ENCODE measurements at regions of chr12 and their contacts with region 1.

Region 1: DNA sequence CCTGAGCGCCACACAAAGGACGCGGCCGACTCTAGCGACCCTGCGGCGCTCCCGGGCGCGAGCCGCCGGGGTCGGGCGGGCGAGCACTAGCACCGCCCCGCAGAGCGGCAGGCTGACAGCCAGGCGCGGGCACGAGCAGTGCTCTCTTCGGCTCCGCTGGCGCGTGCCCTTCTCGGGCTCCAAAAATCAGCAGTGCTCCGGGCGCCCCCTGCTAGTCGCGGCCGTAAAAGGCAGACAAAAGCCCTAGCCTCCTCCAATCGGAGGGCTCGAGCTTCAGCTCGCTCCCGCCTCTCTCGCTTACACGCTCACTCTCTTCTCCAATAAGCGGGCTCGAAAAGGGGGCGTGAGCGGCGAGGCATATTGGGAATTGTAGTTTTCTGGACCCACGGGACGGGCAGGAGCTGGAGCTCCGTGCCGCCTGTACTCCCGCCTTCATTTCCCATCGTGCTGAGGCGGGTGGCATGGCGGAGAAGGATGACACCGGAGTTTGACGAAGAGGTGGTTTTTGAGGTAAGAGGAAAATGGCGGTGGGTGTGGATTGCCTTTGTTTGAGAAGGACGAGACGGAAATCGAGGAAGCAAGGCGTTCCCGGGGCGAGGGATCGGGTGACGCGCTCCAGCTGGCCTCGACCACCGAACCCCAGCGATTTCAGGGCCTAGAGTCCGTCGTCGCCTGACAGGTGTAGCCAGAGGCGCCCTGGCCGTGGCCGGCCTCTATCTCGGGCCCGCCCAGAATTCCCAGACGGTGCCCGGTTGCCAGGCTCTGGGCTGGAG is at the starts of genes FGD6 and VEZT:
- DNase-seq: peak; percentile 100
- H3K4me3 ChIP-seq: peak within 1 kb of the TSS; percentile 72 to 95 (median 92)
- H3K27ac ChIP-seq: peak within 1 kb of the TSS; percentile 93
- H3K4me1 ChIP-seq: peaks cover 21% of the 10 kb centered on the region
- H3K27me3 ChIP-seq: no peaks in the 10 kb centered on the region
- CTCF ChIP-seq: peak; percentile 41 to 75
- total RNA-seq, gene FGD6: 39.3 to 55.6 TPM
- total RNA-seq, gene VEZT: 113 to 133 TPM

Region 2: DNA sequence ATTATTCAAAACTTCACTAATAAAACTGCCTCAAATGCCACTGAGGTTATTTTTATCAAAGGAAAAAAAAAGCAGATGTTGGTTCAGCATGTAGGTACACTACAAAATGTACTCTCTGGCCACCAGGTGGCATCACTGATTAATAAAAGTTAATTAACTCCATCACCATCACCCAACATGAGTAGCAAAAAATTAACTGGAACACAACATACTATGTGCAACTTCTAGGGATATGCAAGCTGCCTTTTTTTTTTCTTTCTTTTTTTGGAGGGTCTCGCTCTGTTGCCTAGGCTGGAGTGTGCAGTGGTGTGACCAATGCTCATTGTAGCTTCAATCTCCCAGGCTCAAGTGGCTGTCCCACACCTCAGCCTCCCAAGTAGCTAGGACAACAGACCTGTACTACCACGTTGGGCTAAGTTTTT is 100.4 kb before region 1 on chr12:
- CTCF ChIA-PET with region 1: interaction called, 8 read pairs
- dilution Hi-C with region 1: loop called (anchors 5 kb)
- in situ Hi-C with region 1: loop called in 1 of 2 experiments (anchors 5 kb)
- intact Hi-C with region 1: loop called (anchors 1 kb)
- DNase-seq: no peak
- H3K4me3 ChIP-seq: peak overlapping the region in 1 of 3 experiments; percentile 56
- H3K27ac ChIP-seq: peak overlapping the region; percentile 99
- H3K4me1 ChIP-seq: peaks cover 44% of the 10 kb centered on the region
- H3K27me3 ChIP-seq: no peaks in the 10 kb centered on the region
- CTCF ChIP-seq: peak; percentile 67 to 71

Region 3: DNA sequence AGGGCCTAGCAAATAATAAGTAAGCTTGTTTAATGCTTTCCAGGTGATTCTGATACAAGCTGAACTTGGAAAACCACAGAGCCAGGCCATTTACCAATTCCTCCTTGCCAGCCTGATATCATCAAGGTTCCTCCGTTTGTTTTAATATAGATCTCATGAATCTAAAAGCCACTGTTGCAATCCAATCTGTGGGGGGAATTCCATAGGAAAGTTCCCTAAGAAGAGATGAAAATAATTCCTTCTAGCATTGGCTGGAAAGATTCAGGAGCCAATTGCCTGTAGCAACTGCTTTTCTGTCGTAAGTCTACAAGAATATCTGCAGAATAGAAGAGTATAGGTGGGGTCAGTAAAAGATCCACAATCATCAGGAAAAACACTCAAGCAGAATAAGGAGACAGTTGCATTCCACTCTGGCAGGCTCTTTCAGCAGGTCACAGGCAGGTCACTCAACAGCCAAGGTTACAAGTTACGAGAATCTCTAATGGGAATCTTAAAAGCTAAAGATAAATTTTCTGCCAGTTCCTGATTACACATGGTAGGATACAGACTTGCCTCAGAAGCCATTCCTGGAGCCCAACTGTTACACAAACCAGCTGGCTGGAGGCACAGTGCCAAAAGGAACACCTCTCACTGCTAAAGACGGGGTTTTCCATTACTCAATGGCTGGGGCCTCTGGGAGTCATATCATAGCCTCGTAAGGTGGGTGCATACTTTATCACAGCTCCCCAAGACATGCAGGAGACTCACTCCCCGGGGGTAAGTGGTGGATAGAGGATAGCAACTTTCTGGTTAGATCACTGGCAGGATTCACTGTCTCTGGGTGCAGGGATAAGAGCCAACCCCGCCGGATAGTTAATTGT is 43.9 kb before region 1 on chr12:
- CTCF ChIA-PET with region 1: no interaction called
- dilution Hi-C with region 1: loop called (anchors 5 kb)
- in situ Hi-C with region 1: no loop called
- intact Hi-C with region 1: loop called (anchors 2 kb)
- DNase-seq: peak; percentile 91
- H3K4me3 ChIP-seq: no peak overlapping the region
- H3K27ac ChIP-seq: peak overlapping the region; percentile 53
- H3K4me1 ChIP-seq: peaks cover 34% of the 10 kb centered on the region
- H3K27me3 ChIP-seq: no peaks in the 10 kb centered on the region
- CTCF ChIP-seq: no peak

Region 4: GRCh38 chr12:95473884-95474659 is 256.5 kb after region 1 on chr12 and contains the start of gene METAP2:
- CTCF ChIA-PET with region 1: no interaction called
- dilution Hi-C with region 1: no loop called
- in situ Hi-C with region 1: no loop called
- intact Hi-C with region 1: loop called (anchors 5 kb)
- DNase-seq: peak; percentile 98
- H3K4me3 ChIP-seq: peak within 1 kb of the TSS; percentile 69 to 99 (median 89)
- H3K27ac ChIP-seq: peak within 1 kb of the TSS; percentile 93
- H3K4me1 ChIP-seq: peaks cover 5% of the 10 kb centered on the region
- H3K27me3 ChIP-seq: no peaks in the 10 kb centered on the region
- CTCF ChIP-seq: no peak
- total RNA-seq, gene METAP2: 42.0 to 89.8 TPM